Heart right ventricle (tissue), 16 donors: ENCODE measurements at regions of chr1 and their contacts with region 1.

Region 1: DNA sequence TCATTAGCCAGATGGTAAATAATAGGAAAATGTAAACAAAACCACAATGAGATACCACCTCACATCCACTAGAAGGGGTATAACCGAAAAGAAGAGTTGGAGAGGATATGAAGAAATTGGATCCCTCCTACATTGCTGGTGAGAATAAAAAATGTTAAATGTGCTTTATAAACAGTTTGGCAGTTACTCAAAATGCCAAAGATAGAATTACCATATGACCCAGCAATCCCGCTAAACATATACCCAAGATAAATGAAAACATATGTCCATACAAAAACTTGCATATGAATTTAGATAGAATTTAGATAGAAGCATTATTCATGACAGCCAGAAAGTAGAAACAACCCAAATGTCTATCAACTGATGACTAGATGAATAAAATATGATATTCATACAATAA is 4.4 kb upstream of the FMO2 start:
- DNase-seq: no peak
- ATAC-seq: no peak
- H3K4me3 ChIP-seq: no peak overlapping the region
- H3K27ac ChIP-seq: no peak overlapping the region
- H3K4me1 ChIP-seq: peaks cover 0 to 6% (median 0%) of the 10 kb centered on the region in 9 donors
- H3K27me3 ChIP-seq: no peaks in the 10 kb centered on the region
- CTCF ChIP-seq: no peak

Region 2: DNA sequence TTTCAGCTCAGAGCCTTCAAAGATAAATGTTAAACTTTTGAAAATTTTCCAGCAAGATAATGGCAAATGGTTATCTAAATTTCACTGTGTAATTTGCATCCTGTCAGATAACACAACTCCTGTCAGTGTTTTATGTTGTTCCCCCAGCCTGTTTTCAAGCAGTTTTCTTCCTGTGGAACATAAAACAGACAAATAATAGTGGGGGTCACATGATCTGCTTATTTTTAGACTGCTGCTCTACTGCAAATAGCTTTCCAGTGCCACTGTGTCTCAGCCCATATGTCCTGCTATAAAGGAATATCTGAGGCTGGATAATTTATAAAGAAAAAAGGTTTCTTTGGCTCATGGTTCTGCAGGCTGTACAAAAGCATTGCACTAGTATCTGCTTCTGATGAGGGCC is 57.8 kb before region 1 on chr1:
- intact Hi-C with region 1: loop called in 1 of 10 experiments (anchors 5 kb)
- DNase-seq: no peak
- ATAC-seq: peak in 6 of 8 donors; percentile 23 to 76 (median 64)
- H3K4me3 ChIP-seq: no peak overlapping the region
- H3K27ac ChIP-seq: peak overlapping the region in 8 of 10 donors; percentile 3 to 75 (median 54)
- H3K4me1 ChIP-seq: peaks cover 6 to 42% (median 30%) of the 10 kb centered on the region in 9 donors
- H3K27me3 ChIP-seq: no peaks in the 10 kb centered on the region
- CTCF ChIP-seq: no peak

Region 3: DNA sequence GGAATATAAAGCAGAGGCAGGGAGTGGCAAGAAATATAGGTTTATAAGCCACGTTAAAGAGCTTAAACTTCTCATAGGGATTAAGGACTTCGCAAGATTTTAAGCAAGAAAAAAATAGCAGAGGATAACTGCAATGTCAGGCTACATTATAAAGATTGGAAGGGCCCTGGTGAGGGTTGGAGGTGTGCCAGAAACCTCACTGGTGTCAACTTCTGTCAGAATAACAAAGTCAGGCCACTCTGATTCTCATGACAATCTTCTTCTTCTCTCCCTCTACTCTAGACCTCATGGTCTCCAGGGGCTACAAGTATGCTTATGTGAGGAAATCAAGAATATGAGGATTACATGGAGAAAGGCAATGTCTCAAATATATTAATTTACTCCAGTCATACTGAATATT is 28.1 kb before region 1 on chr1:
- intact Hi-C with region 1: loop called in 1 of 10 experiments (anchors 1 kb)
- DNase-seq: peak; percentile 18 to 26
- ATAC-seq: no peak
- H3K4me3 ChIP-seq: no peak overlapping the region
- H3K27ac ChIP-seq: no peak overlapping the region
- H3K4me1 ChIP-seq: peaks cover 0 to 9% (median 0%) of the 10 kb centered on the region in 9 donors
- H3K27me3 ChIP-seq: no peaks in the 10 kb centered on the region
- CTCF ChIP-seq: no peak